BJ (cell line): ENCODE measurements at regions of chr20 and their contacts with region 1.

Region 1: DNA sequence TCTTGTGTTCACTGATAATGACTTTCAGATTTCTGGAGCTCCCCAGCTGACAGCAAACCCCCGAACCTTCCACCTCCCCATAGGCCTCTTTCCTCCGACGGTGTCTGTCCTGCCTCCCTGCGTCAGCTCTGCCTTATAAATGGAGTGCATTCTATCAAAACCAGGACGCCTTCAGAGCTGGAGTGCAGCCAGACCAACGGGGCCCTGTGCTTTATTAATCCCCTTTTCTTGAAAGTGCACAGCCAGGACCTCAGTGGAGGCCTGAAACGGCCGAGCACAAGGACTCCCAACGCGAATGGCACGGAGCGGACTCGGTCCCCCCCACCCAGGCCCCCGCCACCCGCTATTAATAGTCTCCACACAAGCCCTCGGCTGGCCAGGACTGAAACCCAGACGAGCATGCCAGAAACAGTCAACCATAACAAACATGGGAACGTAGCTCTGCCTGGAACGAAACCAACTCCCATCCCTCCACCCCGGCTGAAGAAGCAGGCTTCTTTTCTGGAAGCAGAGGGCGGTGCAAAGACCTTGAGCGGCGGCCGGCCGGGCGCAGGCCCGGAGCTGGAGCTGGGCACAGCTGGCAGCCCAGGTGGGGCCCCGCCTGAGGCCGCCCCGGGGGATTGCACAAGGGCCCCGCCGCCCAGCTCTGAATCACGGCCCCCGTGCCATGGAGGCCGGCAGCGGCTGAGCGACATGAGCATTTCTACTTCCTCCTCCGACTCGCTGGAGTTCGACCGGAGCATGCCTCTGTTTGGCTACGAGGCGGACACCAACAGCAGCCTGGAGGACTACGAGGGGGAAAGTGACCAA is 42.3 kb upstream of the NAA20 start:
- DNase-seq: peak; percentile 94
- H3K4me3 ChIP-seq: peak overlapping the region; percentile 82
- H3K27me3 ChIP-seq: no peaks in the 10 kb centered on the region
- CTCF ChIP-seq: peak; percentile 8; the same call in 1 of the 2 replicates

Region 2: GRCh38 chr20:19692685-19693119 is 282.1 kb before region 1 on chr20:
- CTCF ChIA-PET with region 1: interaction called, 10 read pairs
- POLR2A ChIA-PET with region 1: no interaction called
- DNase-seq: no peak
- H3K4me3 ChIP-seq: no peak overlapping the region
- H3K27me3 ChIP-seq: no peaks in the 10 kb centered on the region
- CTCF ChIP-seq: peak; percentile 86

Region 3: GRCh38 chr20:19784511-19785172 is 190.2 kb before region 1 on chr20:
- CTCF ChIA-PET with region 1: interaction called, 11 read pairs
- POLR2A ChIA-PET with region 1: interaction called, 3 read pairs
- DNase-seq: no peak
- H3K4me3 ChIP-seq: no peak overlapping the region
- H3K27me3 ChIP-seq: no peaks in the 10 kb centered on the region
- CTCF ChIP-seq: peak; percentile 69

Region 4: DNA sequence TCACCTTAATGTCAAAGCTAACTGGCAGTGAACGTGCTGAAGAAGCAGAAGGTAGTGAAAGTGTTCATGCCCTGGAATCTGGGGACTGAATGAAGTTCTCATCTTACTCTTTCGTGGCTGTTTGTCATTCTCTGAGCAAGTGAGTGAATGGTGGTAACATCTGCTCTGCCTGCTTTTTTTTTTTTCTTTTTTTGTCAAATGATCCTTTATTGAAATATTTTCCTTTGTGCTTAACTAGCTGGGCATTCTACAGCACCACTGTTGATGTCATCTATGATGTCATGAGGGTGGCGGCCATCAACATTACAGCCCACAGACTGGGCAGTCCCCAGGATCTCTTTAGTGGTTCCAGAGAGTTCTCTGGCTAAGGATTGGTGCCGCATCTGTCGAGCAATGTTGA is 151.6 kb before region 1 on chr20:
- CTCF ChIA-PET with region 1: no interaction called
- POLR2A ChIA-PET with region 1: interaction called, 11 read pairs
- DNase-seq: no peak
- H3K4me3 ChIP-seq: no peak overlapping the region
- H3K27me3 ChIP-seq: no peaks in the 10 kb centered on the region
- CTCF ChIP-seq: no peak

Region 5: DNA sequence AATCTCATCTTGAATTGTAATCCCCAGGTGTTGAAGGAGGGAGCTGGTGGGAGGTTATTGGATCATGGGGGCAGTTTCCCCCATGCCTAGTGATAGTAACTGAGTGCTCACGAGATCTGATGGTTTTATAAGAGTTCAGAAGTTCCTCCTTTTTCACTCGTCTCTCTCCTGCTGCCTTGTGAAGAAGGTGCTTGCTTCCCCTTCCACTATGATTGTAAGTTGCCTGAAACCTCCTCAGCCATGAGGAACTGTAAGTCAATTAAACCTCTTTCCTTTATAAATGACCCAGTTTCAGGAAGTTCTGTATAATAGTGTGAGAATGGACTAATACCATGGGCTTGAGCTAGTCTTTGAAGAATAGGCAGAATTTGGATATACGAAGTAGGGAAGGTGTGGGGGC is 102.8 kb before region 1 on chr20:
- CTCF ChIA-PET with region 1: no interaction called
- POLR2A ChIA-PET with region 1: no interaction called
- DNase-seq: no peak
- H3K4me3 ChIP-seq: no peak overlapping the region
- H3K27me3 ChIP-seq: no peaks in the 10 kb centered on the region
- CTCF ChIP-seq: no peak

Region 6: GRCh38 chr20:19964289-19965263 is 10.3 kb before region 1 on chr20:
- CTCF ChIA-PET with region 1: interaction called, 16 read pairs
- POLR2A ChIA-PET with region 1: no interaction called
- DNase-seq: peak; percentile 87
- H3K4me3 ChIP-seq: no peak overlapping the region
- H3K27me3 ChIP-seq: no peaks in the 10 kb centered on the region
- CTCF ChIP-seq: no peak

Region 7: DNA sequence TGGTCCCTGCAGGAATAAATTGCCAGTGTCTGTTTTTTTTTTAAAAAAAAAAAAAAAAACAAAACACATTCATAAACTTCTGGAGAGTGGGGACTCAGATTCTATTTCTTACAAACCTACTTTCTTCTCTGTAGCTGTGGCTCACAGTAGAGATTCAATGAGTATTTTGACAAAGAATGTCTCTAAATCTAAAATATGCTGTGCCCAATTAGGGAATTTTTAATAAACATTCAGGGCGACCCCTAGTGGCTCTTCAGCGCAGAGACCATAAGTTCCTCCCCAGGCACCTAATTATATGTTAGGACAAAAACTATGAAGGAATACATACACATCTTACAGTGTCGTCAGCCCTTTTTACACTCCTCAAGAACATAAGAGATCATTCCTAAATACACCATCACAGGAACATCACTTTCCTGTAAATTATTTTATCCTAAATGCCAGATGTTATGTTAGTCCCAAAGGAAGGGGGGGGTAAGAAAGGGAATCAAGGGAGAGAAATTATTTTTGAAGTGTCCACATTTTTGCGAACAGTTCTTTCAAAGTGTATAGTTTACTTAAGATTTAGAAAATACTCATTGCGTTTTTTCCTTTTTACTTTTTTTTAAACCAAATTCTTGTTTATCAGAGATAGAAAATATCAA is 20.5 kb after region 1 on chr20:
- CTCF ChIA-PET with region 1: interaction called, 39 read pairs
- POLR2A ChIA-PET with region 1: interaction called, 24 read pairs
- DNase-seq: no peak
- H3K4me3 ChIP-seq: no peak overlapping the region
- H3K27me3 ChIP-seq: no peaks in the 10 kb centered on the region
- CTCF ChIP-seq: peak; percentile 80

Region 8: GRCh38 chr20:20184149-20184548 is 209.3 kb after region 1 on chr20:
- CTCF ChIA-PET with region 1: no interaction called
- POLR2A ChIA-PET with region 1: no interaction called
- DNase-seq: no peak
- H3K4me3 ChIP-seq: no peak overlapping the region
- H3K27me3 ChIP-seq: no peaks in the 10 kb centered on the region
- CTCF ChIP-seq: peak; percentile 41